Activated B cell treated with CpG ODN at 0.5 μM for 24 hours (primary cell): ENCODE measurements at regions of chr11 and their contacts with region 1.

Region 1: GRCh38 chr11:10307442-10308207 is 2.8 kb downstream of the ADM start:
- DNase-seq: peak; percentile 75
- ATAC-seq: peak; percentile 76
- H3K4me3 Mint-ChIP-seq: peak overlapping the region; percentile 97
- H3K27ac Mint-ChIP-seq: peak overlapping the region; percentile 67
- H3K4me1 Mint-ChIP-seq: peaks cover 44% of the 10 kb centered on the region
- H3K27me3 Mint-ChIP-seq: peaks cover 8% of the 10 kb centered on the region
- CTCF ChIP-seq: peak; percentile 95

Region 2: DNA sequence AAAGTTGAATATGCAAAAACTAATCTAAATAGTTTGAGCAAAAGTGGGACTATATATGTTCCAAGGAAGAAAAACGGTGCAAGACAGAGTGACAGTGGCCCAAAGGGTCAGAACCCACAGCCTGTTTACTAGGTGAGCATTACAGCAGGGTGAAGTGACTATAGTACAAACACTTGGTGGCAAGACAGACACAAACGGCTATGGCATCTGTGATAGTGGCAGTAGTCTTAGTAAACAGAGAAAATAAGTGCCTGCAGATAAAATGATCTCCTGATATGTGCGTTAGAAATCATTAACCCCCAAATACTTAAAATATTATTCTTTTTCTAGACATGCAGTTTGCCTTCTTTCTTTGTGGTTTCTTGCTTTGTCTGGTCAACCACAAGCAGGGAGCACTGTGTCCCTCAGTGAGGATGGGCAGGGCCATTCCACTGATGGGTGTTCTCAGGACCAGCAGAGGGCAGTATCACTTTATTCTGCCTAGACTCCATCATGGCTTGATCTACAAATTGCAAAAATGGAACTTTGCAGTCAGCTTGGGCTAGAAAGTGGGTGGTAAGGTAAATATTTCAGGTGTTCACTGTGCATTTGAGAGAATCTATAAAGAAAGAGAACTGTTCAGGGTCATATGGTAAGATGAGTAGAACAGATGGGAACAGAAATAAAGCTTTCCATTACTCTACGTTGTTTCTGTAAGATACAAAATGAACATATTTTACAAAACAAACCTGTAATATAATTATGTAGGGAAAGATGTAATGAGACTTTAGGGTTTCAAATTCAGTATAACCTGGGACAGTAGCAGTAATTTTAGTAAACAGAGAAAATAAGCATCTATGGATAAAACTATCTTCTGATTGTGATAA is 445.5 kb before region 1 on chr11:
- CTCF ChIA-PET with region 1: interaction called, 8 read pairs
- POLR2A ChIA-PET with region 1: interaction called, 5 read pairs
- intact Hi-C with region 1: loop called (anchors 5 kb)
- DNase-seq: no peak
- ATAC-seq: peak; percentile 82
- H3K4me3 Mint-ChIP-seq: no peak overlapping the region
- H3K27ac Mint-ChIP-seq: no peak overlapping the region
- H3K4me1 Mint-ChIP-seq: peaks cover 31% of the 10 kb centered on the region
- H3K27me3 Mint-ChIP-seq: no peaks in the 10 kb centered on the region
- CTCF ChIP-seq: no peak

Region 3: DNA sequence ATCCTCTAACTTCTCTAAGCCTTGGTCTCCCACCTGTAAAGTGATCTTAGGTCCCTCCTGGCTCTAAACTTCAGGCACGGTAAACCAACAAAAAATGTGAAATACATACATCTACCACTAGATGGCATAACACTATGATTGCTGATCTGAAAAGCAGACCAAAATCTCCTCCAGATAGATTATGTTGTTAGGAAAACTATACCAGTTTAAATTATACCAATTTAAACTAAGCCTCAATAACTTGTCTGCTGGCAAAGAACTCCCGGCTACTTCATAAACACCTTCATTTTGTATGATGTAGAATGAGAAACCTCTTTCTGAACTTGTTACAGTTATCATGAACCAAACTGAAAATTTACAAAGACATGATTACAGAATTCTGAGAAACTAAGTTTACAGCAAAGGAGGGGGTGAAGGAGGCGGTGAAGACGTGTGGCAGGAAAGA is 99.5 kb before region 1 on chr11:
- CTCF ChIA-PET with region 1: interaction called, 105 read pairs
- POLR2A ChIA-PET with region 1: interaction called, 3 read pairs
- intact Hi-C with region 1: loop called (anchors 1 kb)
- DNase-seq: no peak
- ATAC-seq: peak; percentile 37
- H3K4me3 Mint-ChIP-seq: no peak overlapping the region
- H3K27ac Mint-ChIP-seq: no peak overlapping the region
- H3K4me1 Mint-ChIP-seq: no peaks in the 10 kb centered on the region
- H3K27me3 Mint-ChIP-seq: no peaks in the 10 kb centered on the region
- CTCF ChIP-seq: peak; percentile 31

Region 4: DNA sequence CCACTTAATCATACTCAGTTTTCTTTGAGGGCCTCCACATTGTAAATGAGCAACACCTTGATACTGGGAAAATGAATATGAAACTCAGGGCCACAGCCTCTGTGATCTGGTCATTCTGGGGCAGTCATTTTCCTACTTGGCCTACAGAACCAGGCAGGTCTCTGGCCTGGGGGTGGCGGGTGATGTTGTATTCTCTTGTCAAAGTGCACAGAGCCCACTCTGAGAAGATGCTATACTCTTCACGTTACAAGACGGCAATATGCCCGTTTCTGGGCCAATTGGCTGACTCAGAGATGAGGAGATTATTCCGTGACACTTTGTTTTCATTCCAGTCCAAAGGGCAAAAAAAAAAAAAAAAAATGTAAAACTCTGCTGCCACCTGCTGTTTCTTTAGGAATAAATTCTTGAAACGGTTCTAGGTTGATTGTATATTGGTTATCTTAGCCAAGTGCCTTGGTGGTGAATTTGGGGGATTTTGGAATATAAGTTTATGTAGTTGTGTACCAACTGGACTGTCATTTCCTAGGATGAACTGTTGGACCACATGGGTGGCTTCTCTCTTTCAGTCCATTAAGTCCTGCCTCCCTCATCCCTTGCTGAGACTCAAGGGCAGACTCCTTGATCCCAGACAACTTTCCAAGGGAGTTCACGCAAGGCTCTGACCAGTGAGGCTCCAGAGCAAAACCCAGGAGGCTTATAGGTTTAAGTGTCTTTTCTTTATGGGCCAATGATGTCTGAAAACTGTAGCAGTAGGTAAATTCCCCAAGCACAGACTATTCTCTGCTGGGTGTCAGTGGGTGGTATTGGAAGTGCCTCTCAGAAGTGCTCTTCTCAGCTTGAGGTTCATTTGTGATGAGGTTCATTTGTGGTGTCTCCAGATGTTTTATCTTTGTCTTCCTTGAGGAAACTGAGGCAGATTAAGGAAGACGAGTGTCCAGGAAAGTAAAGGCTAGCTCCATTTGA is 15.5 kb after region 1 on chr11:
- CTCF ChIA-PET with region 1: interaction called, 11 read pairs
- POLR2A ChIA-PET with region 1: interaction called, 8 read pairs
- intact Hi-C with region 1: loop called (anchors 1 kb)
- DNase-seq: no peak
- ATAC-seq: peak; percentile 69
- H3K4me3 Mint-ChIP-seq: no peak overlapping the region
- H3K27ac Mint-ChIP-seq: peak overlapping the region; percentile 67
- H3K4me1 Mint-ChIP-seq: peaks cover 14% of the 10 kb centered on the region
- H3K27me3 Mint-ChIP-seq: peaks cover 11% of the 10 kb centered on the region
- CTCF ChIP-seq: no peak